ENCODE measurements at regions of chr9 and their contacts with region 1.

Region 1: DNA sequence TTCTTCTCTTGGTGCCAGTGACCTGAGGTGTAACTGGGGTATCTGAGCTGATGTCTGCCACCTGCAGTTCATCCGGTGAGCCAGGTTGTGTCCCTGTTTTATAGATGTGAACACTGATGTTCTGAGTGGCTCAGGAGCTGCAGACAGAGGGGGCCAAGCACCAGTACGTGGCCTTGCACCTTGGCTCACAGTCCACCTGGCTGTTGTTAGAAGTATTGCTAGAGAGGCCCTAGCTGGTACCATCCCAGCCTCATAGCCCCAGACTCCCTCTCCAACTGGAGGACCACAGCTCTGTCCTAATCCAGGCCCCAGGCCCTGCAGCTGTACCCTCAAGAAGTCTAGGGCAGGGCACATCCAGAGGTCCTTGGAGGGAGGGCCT is 16.2 kb downstream of the PHF2 start:
- DNase-seq: peak; percentile 25 to 57
- H3K4me3 ChIP-seq: no peak overlapping the region
- H3K27ac ChIP-seq: no peak overlapping the region
- H3K4me1 ChIP-seq: peaks cover 0 to 10% (median 5%) of the 10 kb centered on the region in 4 experiments; a peak in 6 of 7 replicates
- H3K27me3 ChIP-seq: no peaks in the 10 kb centered on the region
- CTCF ChIP-seq: peak; percentile 71 to 92 (median 85)
- EP300 ChIP-seq: no peak
- POLR2A ChIP-seq: no peak
- RAD21 ChIP-seq: peak; percentile 50 to 65

Region 2: GRCh38 chr9:93486269-93486668 is 106.4 kb before region 1 on chr9:
- CTCF ChIA-PET with region 1: no interaction called
- POLR2A ChIA-PET with region 1: no interaction called
- DNase-seq: no peak
- H3K4me3 ChIP-seq: no peak overlapping the region
- H3K27ac ChIP-seq: no peak overlapping the region
- H3K4me1 ChIP-seq: no peaks in the 10 kb centered on the region
- H3K27me3 ChIP-seq: no peaks in the 10 kb centered on the region
- CTCF ChIP-seq: no peak
- EP300 ChIP-seq: no peak
- POLR2A ChIP-seq: no peak
- RAD21 ChIP-seq: no peak

Region 3: GRCh38 chr9:93582115-93582514 is 10.5 kb before region 1 on chr9:
- CTCF ChIA-PET with region 1: interaction called, 12 read pairs
- POLR2A ChIA-PET with region 1: interaction called, 4 read pairs
- DNase-seq: no peak
- H3K4me3 ChIP-seq: no peak overlapping the region
- H3K27ac ChIP-seq: no peak overlapping the region
- H3K4me1 ChIP-seq: peaks cover 0 to 14% (median 5%) of the 10 kb centered on the region in 4 experiments; a peak in 5 of 7 replicates
- H3K27me3 ChIP-seq: peaks cover 0 to 6% (median 3%) of the 10 kb centered on the region in 4 experiments; a peak in 5 of 7 replicates
- CTCF ChIP-seq: no peak
- EP300 ChIP-seq: no peak
- POLR2A ChIP-seq: no peak
- RAD21 ChIP-seq: no peak

Measured in H1 (cell line).